ENCODE measurements at regions of chr15 and their contacts with region 1.

Region 1: DNA sequence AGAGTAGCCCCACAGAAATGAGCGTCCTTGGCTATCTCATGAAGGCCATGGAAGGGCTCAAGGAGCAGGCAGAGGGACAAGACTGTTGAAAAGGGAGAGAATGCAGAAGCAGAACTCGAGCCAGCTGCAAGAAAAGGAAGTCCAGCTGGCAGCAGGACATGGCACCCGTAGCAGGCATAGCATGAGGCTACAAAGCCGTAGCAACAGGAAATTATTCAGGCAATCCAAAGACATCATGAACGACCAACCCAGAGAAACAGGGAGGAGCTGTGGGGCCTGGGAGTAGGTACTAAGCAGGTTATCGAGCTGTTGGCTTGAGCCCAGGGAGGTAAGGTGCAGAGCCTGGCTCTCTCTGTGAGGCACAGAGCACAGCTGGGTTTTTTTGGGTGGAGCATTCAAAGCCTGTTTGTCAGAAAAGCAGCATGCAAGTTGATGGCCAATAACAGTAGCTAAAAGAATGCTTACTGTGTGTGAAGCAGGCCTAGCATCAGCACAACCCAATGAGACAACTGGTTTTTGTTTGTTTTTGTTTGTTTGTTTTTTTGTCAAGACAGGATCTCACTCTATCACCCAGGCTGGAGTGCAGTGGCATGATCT is 144.0 kb upstream of the SMAD3 start:
- DNase-seq: no peak
- ATAC-seq: no peak
- H3K4me3 ChIP-seq: no peak overlapping the region
- H3K27ac ChIP-seq: no peak overlapping the region
- H3K4me1 ChIP-seq: no peaks in the 10 kb centered on the region
- H3K27me3 ChIP-seq: no peaks in the 10 kb centered on the region
- CTCF ChIP-seq: no peak
- EP300 ChIP-seq: no peak
- POLR2A ChIP-seq: no peak
- RAD21 ChIP-seq: no peak

Region 2: GRCh38 chr15:66894986-66895780 is 26.2 kb before region 1 on chr15:
- CTCF ChIA-PET with region 1: no interaction called
- POLR2A ChIA-PET with region 1: no interaction called
- RAD21 ChIA-PET with region 1: no interaction called
- SMC1A ChIA-PET with region 1: no interaction called
- in situ Hi-C with region 1: no loop called
- intact Hi-C with region 1: no loop called
- DNase-seq: no peak
- ATAC-seq: no peak
- H3K4me3 ChIP-seq: no peak overlapping the region
- H3K27ac ChIP-seq: no peak overlapping the region
- H3K4me1 ChIP-seq: no peaks in the 10 kb centered on the region
- H3K27me3 ChIP-seq: no peaks in the 10 kb centered on the region
- CTCF ChIP-seq: no peak
- EP300 ChIP-seq: no peak
- POLR2A ChIP-seq: no peak
- RAD21 ChIP-seq: no peak

Region 3: GRCh38 chr15:66907826-66908743 is 13.3 kb before region 1 on chr15:
- CTCF ChIA-PET with region 1: interaction called, 12 read pairs
- POLR2A ChIA-PET with region 1: no interaction called
- RAD21 ChIA-PET with region 1: no interaction called
- SMC1A ChIA-PET with region 1: interaction called, 3 read pairs
- in situ Hi-C with region 1: no loop called
- intact Hi-C with region 1: no loop called
- DNase-seq: peak; percentile 39
- ATAC-seq: peak; percentile 77
- H3K4me3 ChIP-seq: no peak overlapping the region
- H3K27ac ChIP-seq: no peak overlapping the region
- H3K4me1 ChIP-seq: peaks cover 15% of the 10 kb centered on the region
- H3K27me3 ChIP-seq: no peaks in the 10 kb centered on the region
- CTCF ChIP-seq: no peak
- EP300 ChIP-seq: no peak
- POLR2A ChIP-seq: no peak
- RAD21 ChIP-seq: no peak

Measured in GM12878 (cell line).